ENCODE measurements at regions of chr3 and their contacts with region 1.

Region 1: GRCh38 chr3:134197681-134198261 is 52.9 kb downstream of the RYK start:
- DNase-seq: peak in 1 of 2 donors; percentile 80
- H3K4me3 ChIP-seq: no peak overlapping the region
- H3K27ac ChIP-seq: no peak overlapping the region
- H3K4me1 ChIP-seq: no peaks in the 10 kb centered on the region
- H3K27me3 ChIP-seq: no peaks in the 10 kb centered on the region
- CTCF ChIP-seq: peak in 5 of 7 experiments; percentile 34 to 58 (median 49)
- EP300 ChIP-seq: no peak
- POLR2A ChIP-seq: no peak

Region 2: DNA sequence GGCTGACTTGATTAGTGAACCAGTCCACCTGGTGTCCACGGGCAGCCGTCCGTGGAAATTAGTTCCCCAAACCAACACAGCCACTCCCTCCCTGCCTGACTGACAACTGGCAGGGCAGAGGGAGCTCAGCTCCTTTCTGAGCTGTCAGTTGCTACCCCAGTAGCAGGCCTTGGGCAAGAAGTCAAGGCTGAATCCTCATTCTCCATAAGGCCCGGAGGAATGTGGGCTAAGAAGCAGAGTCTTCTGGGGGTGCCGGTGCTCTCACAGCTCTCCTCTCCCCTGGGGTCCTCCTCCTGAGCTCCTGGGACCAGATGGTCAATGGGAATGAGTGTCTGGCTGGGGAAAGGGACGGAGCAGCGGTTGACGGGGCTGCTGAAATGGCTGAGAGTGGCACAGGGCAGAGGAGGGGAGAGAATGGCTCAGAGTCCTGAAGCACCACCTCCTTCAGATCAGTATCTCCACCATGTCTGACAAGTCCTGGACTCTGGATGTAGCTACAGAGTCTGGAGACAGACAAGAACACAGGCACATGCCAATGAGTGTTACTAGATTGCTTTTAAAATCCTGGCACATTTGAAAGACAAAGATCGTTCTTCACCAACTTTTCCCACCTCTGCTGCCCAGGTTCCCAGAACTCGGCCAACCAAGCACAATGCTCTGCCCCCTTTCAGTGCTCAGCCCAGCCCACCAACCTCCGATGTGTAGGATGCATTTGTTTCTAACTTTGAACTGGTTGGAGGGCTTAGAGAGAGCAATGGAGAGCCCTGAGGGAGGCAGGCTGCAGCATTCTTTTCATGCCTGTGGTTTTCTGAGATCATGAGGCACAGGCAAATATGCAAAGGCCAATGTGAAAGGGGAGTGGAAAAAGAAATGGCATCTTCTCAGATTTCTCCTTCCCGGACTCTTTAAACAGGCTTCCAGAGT is 159.8 kb after region 1 on chr3:
- intact Hi-C with region 1: loop called (anchors 5 kb)
- DNase-seq: peak; percentile 51 to 84
- H3K4me3 ChIP-seq: no peak overlapping the region
- H3K27ac ChIP-seq: peak overlapping the region; percentile 20 to 100 (median 96)
- H3K4me1 ChIP-seq: peaks cover 90 to 100% (median 94%) of the 10 kb centered on the region in 4 donors
- H3K27me3 ChIP-seq: no peaks in the 10 kb centered on the region
- CTCF ChIP-seq: no peak
- EP300 ChIP-seq: no peak
- POLR2A ChIP-seq: no peak

Measured in stomach (tissue), 19 donors.